Right ventricle myocardium inferior (tissue), 1 donor: ENCODE measurements at regions of chrX and their contacts with region 1.

Region 1: GRCh38 chrX:38919202-38919601 is 117.9 kb downstream of the MID1IP1 start:
- DNase-seq: no peak
- ATAC-seq: no peak

Region 2: GRCh38 chrX:38868941-38869401 is 50.2 kb before region 1 on chrX:
- intact Hi-C with region 1: loop called (anchors 10 kb)
- DNase-seq: no peak
- ATAC-seq: peak; percentile 89